Endothelial cell of umbilical vein (primary cell): ENCODE measurements at regions of chr7 and their contacts with region 1.

Region 1: DNA sequence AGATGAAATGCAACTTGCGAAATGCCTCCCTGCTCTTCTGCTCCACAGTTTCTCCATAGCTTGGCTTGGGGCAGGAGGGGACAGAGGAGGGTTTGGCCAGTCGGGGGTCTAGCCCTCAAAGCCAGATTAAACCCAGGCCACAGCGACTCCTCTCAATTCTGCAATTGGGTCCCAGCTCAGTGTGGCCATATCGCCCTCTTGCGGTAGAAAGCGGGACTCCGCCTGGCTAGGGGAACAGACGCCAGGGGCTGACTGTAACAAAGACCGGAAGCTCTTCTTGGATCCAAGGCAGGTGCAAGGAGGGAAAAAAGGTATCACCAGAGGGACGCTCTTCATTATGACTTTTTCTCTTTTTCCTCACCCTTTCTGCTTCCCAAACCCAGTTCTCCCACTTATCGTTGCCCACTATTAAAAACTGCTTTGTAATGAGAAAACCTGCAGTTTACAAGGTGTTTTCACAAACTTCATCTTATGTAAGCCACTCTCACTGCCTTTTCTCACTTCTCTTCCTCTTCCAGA is 36.6 kb upstream of the TNPO3 start:
- DNase-seq: peak; percentile 80
- H3K4me3 ChIP-seq: no peak overlapping the region
- H3K27ac ChIP-seq: no peak overlapping the region
- H3K4me1 ChIP-seq: no peaks in the 10 kb centered on the region
- H3K27me3 ChIP-seq: peaks cover 6 to 8% of the 10 kb centered on the region in 2 experiments
- CTCF ChIP-seq: peak; percentile 97 to 98
- POLR2A ChIP-seq: no peak

Region 2: DNA sequence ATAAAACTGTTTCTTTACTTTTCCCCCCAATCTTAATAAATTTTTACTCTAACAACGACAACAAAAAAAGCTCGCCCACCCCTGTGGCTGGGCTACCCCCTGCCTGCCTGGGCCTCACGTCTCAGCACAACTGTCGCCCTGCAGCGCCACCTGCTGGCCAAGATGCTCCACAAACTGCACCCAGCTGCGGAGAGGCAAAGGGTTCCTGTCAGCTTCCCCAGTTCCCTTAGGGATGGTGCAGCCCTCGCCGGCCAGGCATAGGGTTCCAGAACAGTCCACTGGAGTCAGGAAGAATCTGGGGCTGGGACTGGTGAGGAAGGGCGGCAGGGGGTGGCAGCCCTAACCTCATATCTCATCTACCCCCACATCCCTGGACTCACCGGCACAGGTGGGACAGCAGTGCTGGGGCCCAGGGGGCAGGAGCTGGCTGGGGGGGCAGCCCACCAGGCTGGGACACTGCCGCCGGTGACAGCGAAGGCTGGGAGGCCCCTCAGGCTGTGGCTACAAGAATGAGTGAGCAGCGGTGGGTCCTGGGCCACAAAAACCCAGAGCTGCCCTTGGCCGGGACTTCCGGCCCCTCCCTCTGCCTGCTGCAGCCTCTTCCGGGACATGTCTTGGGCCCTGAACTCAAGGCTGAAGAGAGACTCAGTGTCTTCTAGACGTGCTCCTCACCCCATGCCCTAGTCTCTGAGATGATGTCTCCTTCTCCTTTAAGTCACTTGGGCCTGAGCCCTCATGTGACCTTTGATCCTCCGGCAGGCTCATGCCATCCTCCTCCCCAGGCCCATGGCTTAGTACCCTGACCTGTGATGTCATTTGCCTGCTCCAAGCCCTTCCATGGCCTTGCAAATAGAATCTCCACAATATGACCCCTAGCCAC is 207.7 kb before region 1 on chr7:
- CTCF ChIA-PET with region 1: interaction called, 11 read pairs
- POLR2A ChIA-PET with region 1: no interaction called
- dilution Hi-C with region 1: no loop called
- intact Hi-C with region 1: no loop called
- DNase-seq: peak; percentile 61
- H3K4me3 ChIP-seq: no peak overlapping the region
- H3K27ac ChIP-seq: no peak overlapping the region
- H3K4me1 ChIP-seq: no peaks in the 10 kb centered on the region
- H3K27me3 ChIP-seq: no peaks in the 10 kb centered on the region
- CTCF ChIP-seq: peak; percentile 90 to 92
- POLR2A ChIP-seq: no peak

Region 3: DNA sequence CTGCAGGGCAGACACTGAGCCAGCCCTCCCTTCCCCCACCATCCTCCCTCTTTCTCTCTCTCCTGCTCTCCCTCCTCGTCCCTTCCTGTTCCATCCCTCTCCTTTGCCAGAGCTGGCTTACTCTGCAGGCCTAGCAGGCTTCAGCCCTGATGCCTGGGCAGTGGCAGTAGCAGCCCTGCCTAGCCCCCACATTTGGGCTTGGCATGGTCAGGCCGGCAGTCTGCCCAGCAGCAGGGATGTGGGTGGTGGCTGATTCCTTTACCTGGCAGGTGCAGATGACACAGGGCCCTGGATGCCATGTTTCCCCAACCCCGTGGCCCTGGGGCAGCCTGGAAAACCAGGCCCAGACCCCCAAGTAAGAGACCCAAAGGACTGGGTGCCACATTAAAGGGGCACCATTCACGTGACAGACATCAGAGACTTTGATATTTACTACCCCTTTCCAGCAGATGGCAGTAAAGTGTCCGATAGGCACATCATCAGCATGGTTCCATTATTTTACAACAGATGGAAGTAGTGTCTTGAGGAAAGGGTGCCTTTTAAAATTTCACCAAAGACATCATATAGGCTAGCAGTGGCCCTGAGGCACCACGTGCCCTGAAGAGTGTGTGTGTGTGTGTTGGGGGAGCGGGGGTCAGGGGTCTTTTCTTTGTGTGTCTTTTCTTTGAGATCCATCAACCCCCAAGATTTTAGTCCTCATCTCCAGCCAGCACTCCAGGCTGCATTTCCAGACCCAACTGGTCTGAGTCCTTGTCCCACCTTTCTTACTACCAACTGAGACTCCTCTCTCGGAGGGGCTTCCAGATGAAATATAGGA is 187.0 kb before region 1 on chr7:
- CTCF ChIA-PET with region 1: interaction called, 47 read pairs
- POLR2A ChIA-PET with region 1: no interaction called
- dilution Hi-C with region 1: no loop called
- intact Hi-C with region 1: loop called (anchors 1 kb)
- DNase-seq: peak; percentile 53
- H3K4me3 ChIP-seq: no peak overlapping the region
- H3K27ac ChIP-seq: no peak overlapping the region
- H3K4me1 ChIP-seq: no peaks in the 10 kb centered on the region
- H3K27me3 ChIP-seq: peaks cover 11% of the 10 kb centered on the region in 2 experiments
- CTCF ChIP-seq: peak; percentile 48 to 54
- POLR2A ChIP-seq: no peak

Region 4: GRCh38 chr7:129030440-129030839 is 61.1 kb before region 1 on chr7:
- CTCF ChIA-PET with region 1: interaction called, 10 read pairs
- POLR2A ChIA-PET with region 1: no interaction called
- dilution Hi-C with region 1: no loop called
- intact Hi-C with region 1: no loop called
- DNase-seq: no peak
- H3K4me3 ChIP-seq: no peak overlapping the region
- H3K27ac ChIP-seq: no peak overlapping the region
- H3K4me1 ChIP-seq: no peaks in the 10 kb centered on the region
- H3K27me3 ChIP-seq: no peaks in the 10 kb centered on the region
- CTCF ChIP-seq: no peak
- POLR2A ChIP-seq: no peak

Region 5: GRCh38 chr7:129101746-129102145 is 10.2 kb after region 1 on chr7:
- CTCF ChIA-PET with region 1: interaction called, 20 read pairs
- POLR2A ChIA-PET with region 1: no interaction called
- dilution Hi-C with region 1: no loop called
- intact Hi-C with region 1: no loop called
- DNase-seq: no peak
- H3K4me3 ChIP-seq: no peak overlapping the region
- H3K27ac ChIP-seq: no peak overlapping the region
- H3K4me1 ChIP-seq: no peaks in the 10 kb centered on the region
- H3K27me3 ChIP-seq: peaks cover 2 to 5% of the 10 kb centered on the region in 2 experiments
- CTCF ChIP-seq: no peak
- POLR2A ChIP-seq: no peak

Region 6: GRCh38 chr7:129202058-129202777 is 110.7 kb after region 1 on chr7:
- CTCF ChIA-PET with region 1: no interaction called
- POLR2A ChIA-PET with region 1: no interaction called
- dilution Hi-C with region 1: no loop called
- intact Hi-C with region 1: no loop called
- DNase-seq: no peak
- H3K4me3 ChIP-seq: no peak overlapping the region
- H3K27ac ChIP-seq: no peak overlapping the region
- H3K4me1 ChIP-seq: no peaks in the 10 kb centered on the region
- H3K27me3 ChIP-seq: no peaks in the 10 kb centered on the region
- CTCF ChIP-seq: no peak
- POLR2A ChIP-seq: no peak

Region 7: DNA sequence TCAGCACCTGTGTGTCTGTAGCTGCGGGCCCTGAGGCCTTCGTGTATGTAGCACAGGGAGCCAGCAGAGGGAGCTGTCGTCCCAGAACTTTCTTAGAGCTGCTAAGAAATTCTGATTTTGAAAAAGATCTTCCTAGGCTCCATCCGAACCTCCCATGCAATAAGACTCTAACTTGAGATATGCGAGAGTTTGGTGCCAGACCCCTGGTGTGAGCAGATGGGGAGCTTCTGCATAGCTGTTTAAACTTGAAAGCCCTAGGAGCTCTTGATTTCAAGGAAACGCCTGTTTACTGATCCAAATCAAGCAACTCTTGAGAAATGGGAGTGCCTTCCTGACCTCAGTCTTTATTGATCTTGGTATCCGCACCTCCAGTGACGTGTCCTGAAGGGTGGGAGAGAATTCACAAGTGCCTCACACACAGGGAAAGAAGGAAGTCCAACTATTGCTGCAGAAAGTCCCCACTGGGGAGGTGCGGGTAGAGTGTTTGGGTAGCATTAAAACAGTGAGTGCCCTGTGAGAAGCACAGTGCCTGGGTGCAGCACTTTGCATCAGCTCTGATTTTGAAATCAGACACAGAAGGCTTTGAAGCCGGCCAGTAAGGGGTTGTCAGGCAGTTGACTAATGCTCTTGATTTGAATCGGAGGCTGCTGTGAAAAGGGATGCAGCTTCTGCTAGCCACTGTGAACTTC is 276.3 kb after region 1 on chr7:
- CTCF ChIA-PET with region 1: no interaction called
- POLR2A ChIA-PET with region 1: no interaction called
- dilution Hi-C with region 1: no loop called
- intact Hi-C with region 1: no loop called
- DNase-seq: peak; percentile 77
- H3K4me3 ChIP-seq: no peak overlapping the region
- H3K27ac ChIP-seq: no peak overlapping the region
- H3K4me1 ChIP-seq: peaks cover 4% of the 10 kb centered on the region
- H3K27me3 ChIP-seq: no peaks in the 10 kb centered on the region
- CTCF ChIP-seq: peak; percentile 85 to 89
- POLR2A ChIP-seq: no peak